CD8-positive, alpha-beta memory T cell (primary cell): ENCODE measurements at regions of chr1 and their contacts with region 1.

Region 1: DNA sequence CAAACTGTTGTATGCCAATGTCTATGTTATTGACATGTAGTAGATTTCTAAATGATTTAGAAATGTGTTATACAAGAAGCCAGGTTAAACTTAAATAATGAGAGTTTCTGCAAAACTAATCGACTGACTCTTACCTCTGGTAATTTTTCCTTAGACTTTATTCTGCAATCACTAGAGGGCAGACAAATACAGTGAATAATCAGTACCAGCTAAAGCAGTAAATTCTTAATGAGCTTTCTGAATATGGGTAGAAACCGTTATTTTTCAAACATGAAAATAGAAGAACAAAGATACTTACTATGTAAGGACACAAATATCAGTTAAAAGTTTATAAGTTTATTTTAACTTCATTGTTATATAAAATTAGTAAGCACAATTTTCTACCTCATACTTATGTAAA is 97.9 kb upstream of the RGS1 start:
- DNase-seq: peak in 2 of 5 donors; percentile 19 to 23
- H3K4me3 ChIP-seq: no peak overlapping the region
- H3K4me3 Mint-ChIP-seq: no peak overlapping the region
- H3K27ac ChIP-seq: no peak overlapping the region
- H3K27ac Mint-ChIP-seq: no peak overlapping the region
- H3K4me1 ChIP-seq: no peaks in the 10 kb centered on the region
- H3K4me1 Mint-ChIP-seq: no peaks in the 10 kb centered on the region
- H3K27me3 ChIP-seq: no peaks in the 10 kb centered on the region
- H3K27me3 Mint-ChIP-seq: peaks cover 2 to 7% of the 10 kb centered on the region in 2 donors

Region 2: DNA sequence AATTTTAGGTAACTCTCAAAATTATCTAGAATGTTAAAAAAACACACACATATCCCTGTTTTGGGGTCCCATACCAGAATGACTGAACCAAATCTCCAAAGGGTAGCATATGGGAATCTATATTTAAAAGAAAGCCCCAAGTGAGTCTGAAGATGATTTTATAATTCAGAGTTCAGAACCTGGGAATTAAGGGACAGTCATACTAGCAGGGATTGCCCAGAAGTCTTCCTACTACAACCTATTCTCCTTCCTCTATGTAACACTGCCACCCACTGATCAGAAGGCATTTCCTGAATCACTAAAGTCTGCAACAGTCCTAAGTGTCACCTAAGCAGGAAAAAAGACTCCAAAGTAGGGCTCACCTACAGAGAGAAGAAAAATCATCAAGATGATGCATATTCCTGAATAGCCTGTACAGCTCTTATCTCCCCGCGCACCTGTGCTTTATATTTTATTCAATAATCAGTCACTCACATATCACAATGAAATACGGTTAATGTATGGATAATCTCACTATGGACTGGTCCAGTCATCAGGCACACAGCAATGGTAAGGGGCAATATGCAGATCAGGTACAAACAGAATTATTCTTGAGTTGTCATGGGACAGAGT is 102.8 kb after region 1 on chr1:
- CTCF ChIA-PET with region 1: interaction called, 27 read pairs
- POLR2A ChIA-PET with region 1: no interaction called
- DNase-seq: peak in 1 of 5 donors; percentile 17
- H3K4me3 ChIP-seq: no peak overlapping the region
- H3K4me3 Mint-ChIP-seq: peak overlapping the region in 4 of 7 donors; percentile 1 to 54 (median 19)
- H3K27ac ChIP-seq: no peak overlapping the region
- H3K27ac Mint-ChIP-seq: peak overlapping the region in 4 of 8 donors; percentile 8 to 47 (median 24)
- H3K4me1 ChIP-seq: peaks cover 19% of the 10 kb centered on the region
- H3K4me1 Mint-ChIP-seq: peaks cover 34 to 54% (median 53%) of the 10 kb centered on the region in 3 donors
- H3K27me3 ChIP-seq: no peaks in the 10 kb centered on the region
- H3K27me3 Mint-ChIP-seq: no peaks in the 10 kb centered on the region

Region 3: GRCh38 chr1:192609110-192610079 is 131.8 kb after region 1 on chr1:
- CTCF ChIA-PET with region 1: interaction called, 53 read pairs
- POLR2A ChIA-PET with region 1: no interaction called
- DNase-seq: peak; percentile 43 to 82 (median 65)
- H3K4me3 ChIP-seq: peak overlapping the region; percentile 7
- H3K4me3 Mint-ChIP-seq: peak overlapping the region; percentile 1 to 73 (median 57)
- H3K27ac ChIP-seq: peak overlapping the region; percentile 26
- H3K27ac Mint-ChIP-seq: peak overlapping the region; percentile 17 to 94 (median 87)
- H3K4me1 ChIP-seq: peaks cover 11% of the 10 kb centered on the region
- H3K4me1 Mint-ChIP-seq: peaks cover 19 to 20% (median 19%) of the 10 kb centered on the region in 3 donors
- H3K27me3 ChIP-seq: no peaks in the 10 kb centered on the region
- H3K27me3 Mint-ChIP-seq: peaks cover 0 to 2% of the 10 kb centered on the region in 2 donors

Region 4: GRCh38 chr1:193019442-193020026 is 541.9 kb after region 1 on chr1:
- CTCF ChIA-PET with region 1: interaction called, 10 read pairs
- POLR2A ChIA-PET with region 1: no interaction called
- DNase-seq: peak in 2 of 5 donors; percentile 24 to 34
- H3K4me3 ChIP-seq: no peak overlapping the region
- H3K4me3 Mint-ChIP-seq: no peak overlapping the region
- H3K27ac ChIP-seq: no peak overlapping the region
- H3K27ac Mint-ChIP-seq: peak overlapping the region in 1 of 8 donors; percentile 8
- H3K4me1 ChIP-seq: no peaks in the 10 kb centered on the region
- H3K4me1 Mint-ChIP-seq: peaks cover 0 to 5% (median 0%) of the 10 kb centered on the region in 3 donors
- H3K27me3 ChIP-seq: no peaks in the 10 kb centered on the region
- H3K27me3 Mint-ChIP-seq: no peaks in the 10 kb centered on the region